ENCODE measurements at regions of chr12 and their contacts with region 1.

Region 1: GRCh38 chr12:112130441-112130998 is 5.2 kb downstream of the TRAFD1 start:
- DNase-seq: peak in 4 of 5 donors; percentile 68 to 82 (median 74)
- H3K4me3 ChIP-seq: peak overlapping the region; percentile 3 to 23
- H3K4me3 Mint-ChIP-seq: peak overlapping the region; percentile 31 to 82 (median 68)
- H3K27ac ChIP-seq: peak overlapping the region; percentile 61
- H3K27ac Mint-ChIP-seq: peak overlapping the region; percentile 66 to 95 (median 84)
- H3K4me1 ChIP-seq: peaks cover 77% of the 10 kb centered on the region
- H3K4me1 Mint-ChIP-seq: peaks cover 28 to 69% (median 53%) of the 10 kb centered on the region in 4 donors
- H3K27me3 ChIP-seq: no peaks in the 10 kb centered on the region
- H3K27me3 Mint-ChIP-seq: no peaks in the 10 kb centered on the region

Region 2: DNA sequence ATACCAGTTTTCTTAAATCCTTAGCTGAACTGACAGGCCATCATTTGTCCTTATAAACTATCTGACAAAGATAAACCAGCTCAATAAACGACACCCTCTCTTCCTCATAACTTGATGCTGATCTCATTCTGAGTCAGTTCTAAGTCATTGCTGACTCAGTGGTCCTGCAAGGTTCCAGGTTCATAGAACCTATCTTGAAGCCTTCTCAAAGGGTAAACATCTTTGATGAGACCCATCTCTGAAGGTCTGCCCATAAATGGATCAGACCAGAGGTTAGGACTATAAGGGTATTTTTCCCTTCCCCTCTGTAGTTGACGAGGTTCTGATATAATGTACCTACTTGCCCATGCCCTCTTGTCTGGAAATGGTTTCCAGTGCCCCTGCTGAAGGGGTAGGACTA is 33.9 kb before region 1 on chr12:
- CTCF ChIA-PET with region 1: interaction called, 4 read pairs
- POLR2A ChIA-PET with region 1: interaction called, 6 read pairs
- intact Hi-C with region 1: loop called (anchors 5 kb)
- DNase-seq: no peak
- H3K4me3 ChIP-seq: no peak overlapping the region
- H3K4me3 Mint-ChIP-seq: no peak overlapping the region
- H3K27ac ChIP-seq: no peak overlapping the region
- H3K27ac Mint-ChIP-seq: peak overlapping the region in 5 of 7 donors; percentile 36 to 77 (median 71)
- H3K4me1 ChIP-seq: peaks cover 14% of the 10 kb centered on the region
- H3K4me1 Mint-ChIP-seq: peaks cover 27 to 41% (median 30%) of the 10 kb centered on the region in 4 donors
- H3K27me3 ChIP-seq: no peaks in the 10 kb centered on the region
- H3K27me3 Mint-ChIP-seq: no peaks in the 10 kb centered on the region

Region 3: GRCh38 chr12:112140728-112141127 is 10.2 kb after region 1 on chr12:
- CTCF ChIA-PET with region 1: no interaction called
- POLR2A ChIA-PET with region 1: interaction called, 11 read pairs
- intact Hi-C with region 1: no loop called
- DNase-seq: no peak
- H3K4me3 ChIP-seq: no peak overlapping the region
- H3K4me3 Mint-ChIP-seq: no peak overlapping the region
- H3K27ac ChIP-seq: no peak overlapping the region
- H3K27ac Mint-ChIP-seq: peak overlapping the region in 2 of 7 donors; percentile 7 to 44
- H3K4me1 ChIP-seq: no peaks in the 10 kb centered on the region
- H3K4me1 Mint-ChIP-seq: peaks cover 0 to 7% (median 3%) of the 10 kb centered on the region in 4 donors
- H3K27me3 ChIP-seq: no peaks in the 10 kb centered on the region
- H3K27me3 Mint-ChIP-seq: no peaks in the 10 kb centered on the region

Measured in CD4-positive, alpha-beta memory T cell (primary cell).